ENCODE measurements at regions of chr19 and their contacts with region 1.

Region 1: DNA sequence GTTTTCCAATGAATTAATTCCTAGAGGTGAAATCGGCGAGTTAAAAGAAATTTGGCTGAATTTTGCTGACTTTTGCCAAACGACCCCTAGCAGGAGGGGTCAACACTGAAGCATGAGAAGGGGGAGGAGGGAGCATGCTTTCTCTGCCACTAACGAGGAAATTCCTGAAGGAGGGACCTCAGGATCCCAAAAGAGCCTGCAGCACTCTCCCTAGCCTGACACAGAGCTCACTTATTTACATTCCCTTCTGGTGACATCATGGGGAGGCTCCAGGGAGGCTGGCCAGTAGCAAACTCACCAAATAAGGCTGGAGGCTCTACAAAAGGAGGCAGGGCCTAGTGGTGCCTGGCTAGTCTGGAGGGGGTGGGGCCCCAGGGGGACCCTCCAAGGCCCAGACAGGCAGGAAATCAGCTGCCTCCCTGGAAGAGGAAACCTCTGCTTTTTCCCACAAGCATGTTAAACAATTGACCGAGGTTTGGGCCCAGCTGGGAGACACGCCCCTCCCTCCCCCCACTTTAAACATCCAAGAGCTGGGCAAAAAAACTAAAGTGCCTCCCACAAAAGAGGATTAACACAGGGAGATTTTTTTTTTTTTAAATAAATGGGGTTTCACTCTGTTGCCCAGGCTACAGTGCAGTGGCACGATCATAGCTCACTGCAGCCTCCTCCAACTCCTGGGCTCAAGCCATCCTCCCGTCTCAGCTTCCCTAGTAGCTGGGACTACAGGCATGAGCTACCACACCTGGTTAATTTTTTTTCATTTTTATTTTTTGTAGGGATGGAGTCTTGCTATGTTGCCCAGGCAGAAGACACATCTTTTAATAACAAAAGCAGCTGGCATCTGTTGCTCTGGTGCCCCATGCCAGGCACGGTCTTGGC is 2.1 kb downstream of the DAPK3 start:
- DNase-seq: peak; percentile 94 to 98
- H3K4me3 ChIP-seq: peak overlapping the region; percentile 68 to 100
- H3K27ac ChIP-seq: peak overlapping the region; percentile 94 to 99
- H3K4me1 ChIP-seq: peaks cover 8 to 60% (median 54%) of the 10 kb centered on the region in 4 donors
- H3K27me3 ChIP-seq: no peaks in the 10 kb centered on the region
- CTCF ChIP-seq: no peak

Region 2: GRCh38 chr19:3538965-3539742 is 429.6 kb before region 1 on chr19 and contains the start of gene TEKTIP1:
- intact Hi-C with region 1: loop called (anchors 10 kb)
- DNase-seq: no peak
- H3K4me3 ChIP-seq: no peak within 1 kb of the TSS
- H3K27ac ChIP-seq: no peak within 1 kb of the TSS
- H3K4me1 ChIP-seq: peaks cover 0 to 28% (median 10%) of the 10 kb centered on the region in 4 donors
- H3K27me3 ChIP-seq: no peaks in the 10 kb centered on the region
- CTCF ChIP-seq: no peak

Region 3: DNA sequence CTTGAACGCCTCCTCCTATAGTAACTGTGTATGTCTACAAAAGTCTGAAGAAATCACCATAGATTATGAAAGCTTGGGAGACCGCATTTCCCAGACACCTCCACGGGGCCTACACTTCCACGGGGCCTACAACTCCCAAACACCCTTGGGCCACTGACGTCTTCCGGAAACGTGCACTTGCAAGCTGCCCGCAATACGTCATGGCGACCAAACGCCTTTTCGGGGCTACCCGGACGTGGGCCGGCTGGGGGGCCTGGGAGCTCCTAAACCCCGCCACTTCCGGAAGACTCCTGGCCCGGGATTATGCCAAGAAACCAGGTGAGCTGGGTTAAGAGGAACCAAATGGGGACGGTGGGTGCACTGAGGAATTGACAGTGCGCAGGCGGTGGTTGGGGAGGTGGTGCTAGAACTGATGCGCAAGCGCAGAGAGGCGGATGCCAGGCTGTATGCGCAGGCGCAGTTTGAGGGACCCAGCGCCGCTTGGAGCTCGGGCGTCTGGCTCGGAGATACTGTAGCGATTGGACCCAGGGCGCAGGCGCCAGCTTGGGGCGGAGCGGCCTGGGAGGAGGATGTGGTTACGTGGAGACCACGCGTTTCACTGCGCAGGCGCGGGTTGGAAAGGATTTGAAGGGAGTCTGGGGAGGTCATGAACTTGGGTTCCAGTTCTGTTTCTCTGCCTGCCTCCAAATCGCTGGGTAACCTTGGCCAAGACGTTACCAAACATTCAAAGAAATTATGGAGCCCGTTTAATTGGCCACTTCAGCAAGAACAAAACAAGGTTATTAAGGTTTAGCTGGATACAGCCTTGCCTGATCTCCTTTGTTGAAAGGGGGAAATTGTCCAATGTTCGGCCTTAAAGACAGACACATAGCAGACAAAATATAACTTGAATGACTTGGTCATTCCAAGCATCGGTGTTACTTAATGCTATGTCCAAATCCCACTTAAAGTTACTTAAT is 206.0 kb before region 1 on chr19 and contains the start of gene MRPL54:
- intact Hi-C with region 1: loop called (anchors 10 kb)
- DNase-seq: peak; percentile 99 to 100
- H3K4me3 ChIP-seq: peak within 1 kb of the TSS; percentile 77 to 92
- H3K27ac ChIP-seq: peak within 1 kb of the TSS; percentile 95 to 99
- H3K4me1 ChIP-seq: peaks cover 0 to 43% (median 35%) of the 10 kb centered on the region in 4 donors
- H3K27me3 ChIP-seq: no peaks in the 10 kb centered on the region
- CTCF ChIP-seq: peak in 1 of 2 experiments; percentile 22